Ascending aorta (tissue), 2 donors: ENCODE measurements at regions of chr12 and their contacts with region 1.

Region 1: DNA sequence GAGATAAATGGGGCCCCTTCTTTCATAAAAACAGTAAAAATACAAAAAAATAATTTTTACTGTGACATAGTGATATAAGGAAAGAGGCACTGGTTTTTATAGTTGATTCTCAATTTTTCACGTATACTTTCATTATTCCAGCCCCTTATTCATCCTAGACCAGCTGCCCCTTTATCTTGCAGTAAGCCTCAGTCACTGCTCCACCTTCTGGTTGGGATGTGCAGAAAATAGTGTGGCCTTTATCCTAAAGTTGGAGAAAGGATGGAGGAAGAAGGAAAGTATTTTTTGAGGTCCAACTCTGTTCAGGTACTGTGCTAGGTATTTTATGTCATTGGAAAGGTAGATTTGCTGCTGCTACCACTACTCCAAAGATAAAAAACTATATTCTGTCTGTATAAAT is 172.7 kb downstream of the ANO6 start:
- DNase-seq: no peak
- H3K4me3 ChIP-seq: no peak overlapping the region
- H3K27ac ChIP-seq: peak overlapping the region in 1 of 2 donors; percentile 4
- H3K4me1 ChIP-seq: no peaks in the 10 kb centered on the region
- H3K27me3 ChIP-seq: no peaks in the 10 kb centered on the region
- CTCF ChIP-seq: peak; percentile 44 to 64 (median 52)

Region 2: DNA sequence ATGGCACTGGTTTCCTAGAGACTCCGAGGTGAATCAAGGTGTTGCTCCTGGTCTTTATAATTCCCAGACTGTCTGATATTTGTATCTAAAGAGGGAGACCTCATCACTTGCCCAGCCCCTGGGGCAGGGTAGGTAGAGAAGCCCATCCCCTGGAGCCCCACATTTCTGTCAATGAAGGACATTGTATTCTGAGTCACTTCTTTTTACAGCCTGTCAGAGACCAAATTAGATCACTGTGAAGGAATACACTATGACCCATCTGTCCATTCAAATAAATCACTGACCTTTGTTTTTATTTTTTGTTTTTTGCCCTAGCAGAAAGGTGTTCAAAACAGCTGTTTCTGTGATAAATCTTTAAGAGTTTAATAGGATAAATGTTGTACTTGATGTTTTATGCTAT is 240.5 kb before region 1 on chr12:
- intact Hi-C with region 1: no loop called
- DNase-seq: no peak
- H3K4me3 ChIP-seq: no peak overlapping the region
- H3K27ac ChIP-seq: no peak overlapping the region
- H3K4me1 ChIP-seq: no peaks in the 10 kb centered on the region
- H3K27me3 ChIP-seq: no peaks in the 10 kb centered on the region
- CTCF ChIP-seq: no peak

Region 3: DNA sequence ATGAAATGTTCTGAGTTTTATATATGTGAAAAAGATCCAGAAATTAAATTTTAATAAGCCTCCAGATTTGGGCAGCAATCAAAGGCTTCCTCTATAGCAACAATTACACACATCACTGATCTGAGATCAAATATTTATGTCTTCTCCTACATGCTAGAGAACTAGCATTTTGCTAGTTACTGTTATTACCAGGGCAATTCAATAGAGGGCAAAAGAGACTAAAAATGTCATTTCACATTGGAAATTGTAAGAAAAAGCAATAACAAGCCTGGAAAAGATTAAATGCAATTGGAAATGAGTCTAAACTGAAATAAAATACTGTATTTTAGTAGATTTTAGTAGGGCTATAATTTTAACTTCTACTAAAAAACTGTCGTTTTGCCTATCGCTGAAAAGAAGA is 205.3 kb before region 1 on chr12:
- intact Hi-C with region 1: loop called (anchors 2 kb)
- DNase-seq: no peak
- H3K4me3 ChIP-seq: peak overlapping the region in 1 of 2 donors; percentile 19
- H3K27ac ChIP-seq: no peak overlapping the region
- H3K4me1 ChIP-seq: peaks cover 0 to 3% of the 10 kb centered on the region in 2 donors
- H3K27me3 ChIP-seq: no peaks in the 10 kb centered on the region
- CTCF ChIP-seq: peak; percentile 14 to 67 (median 59)

Region 4: GRCh38 chr12:45215419-45216229 is 172.9 kb before region 1 on chr12 and contains the start of gene ANO6:
- intact Hi-C with region 1: loop called (anchors 1 kb)
- DNase-seq: peak; percentile 53 to 95
- H3K4me3 ChIP-seq: peak within 1 kb of the TSS; percentile 85 to 93
- H3K27ac ChIP-seq: peak within 1 kb of the TSS; percentile 92 to 97
- H3K4me1 ChIP-seq: peaks cover 6 to 11% of the 10 kb centered on the region in 2 donors
- H3K27me3 ChIP-seq: no peaks in the 10 kb centered on the region
- CTCF ChIP-seq: peak in 2 of 3 experiments; percentile 12 to 22
- total RNA-seq, gene ANO6: 49.6 TPM

Region 5: GRCh38 chr12:45343269-45344051 is 45.1 kb before region 1 on chr12:
- intact Hi-C with region 1: no loop called
- DNase-seq: no peak
- H3K4me3 ChIP-seq: no peak overlapping the region
- H3K27ac ChIP-seq: no peak overlapping the region
- H3K4me1 ChIP-seq: peaks cover 4 to 14% of the 10 kb centered on the region in 2 donors
- H3K27me3 ChIP-seq: no peaks in the 10 kb centered on the region
- CTCF ChIP-seq: no peak

Region 6: DNA sequence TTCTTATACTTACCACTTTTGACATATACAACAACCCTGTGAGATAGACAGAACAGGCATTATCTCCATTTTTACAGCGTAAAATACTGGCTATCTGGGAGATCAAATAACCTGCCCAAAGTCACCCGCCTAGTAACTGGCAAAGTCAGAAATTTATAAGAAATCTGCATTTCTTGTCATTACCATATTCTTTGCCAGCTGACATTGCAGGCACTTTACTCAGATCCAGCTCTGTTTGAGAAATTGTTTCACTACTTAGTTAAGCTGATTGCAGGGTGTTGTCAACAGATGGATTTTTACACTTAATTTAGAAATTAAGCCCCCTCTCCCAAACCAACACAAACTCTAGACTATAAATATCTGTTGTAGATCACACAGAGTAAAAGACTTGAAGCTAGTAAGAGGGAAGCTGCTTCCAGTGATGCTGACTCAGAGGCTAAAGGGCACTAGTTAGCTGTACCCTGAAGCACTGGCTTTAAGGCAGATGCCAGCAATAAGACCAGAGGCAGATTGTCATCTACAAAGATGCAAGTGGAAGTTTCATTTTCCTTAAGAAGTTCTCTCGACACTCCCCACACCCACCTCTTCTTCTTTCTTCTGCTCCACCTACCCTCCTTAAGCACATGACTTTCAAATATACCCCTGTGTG is 19.6 kb before region 1 on chr12:
- intact Hi-C with region 1: no loop called
- DNase-seq: no peak
- H3K4me3 ChIP-seq: no peak overlapping the region
- H3K27ac ChIP-seq: peak overlapping the region in 1 of 2 donors; percentile 53
- H3K4me1 ChIP-seq: peaks cover 3% of the 10 kb centered on the region in 2 donors
- H3K27me3 ChIP-seq: no peaks in the 10 kb centered on the region
- CTCF ChIP-seq: no peak